Gastrocnemius medialis (tissue), 4 donors: ENCODE measurements at regions of chr15 and their contacts with region 1.

Region 1: DNA sequence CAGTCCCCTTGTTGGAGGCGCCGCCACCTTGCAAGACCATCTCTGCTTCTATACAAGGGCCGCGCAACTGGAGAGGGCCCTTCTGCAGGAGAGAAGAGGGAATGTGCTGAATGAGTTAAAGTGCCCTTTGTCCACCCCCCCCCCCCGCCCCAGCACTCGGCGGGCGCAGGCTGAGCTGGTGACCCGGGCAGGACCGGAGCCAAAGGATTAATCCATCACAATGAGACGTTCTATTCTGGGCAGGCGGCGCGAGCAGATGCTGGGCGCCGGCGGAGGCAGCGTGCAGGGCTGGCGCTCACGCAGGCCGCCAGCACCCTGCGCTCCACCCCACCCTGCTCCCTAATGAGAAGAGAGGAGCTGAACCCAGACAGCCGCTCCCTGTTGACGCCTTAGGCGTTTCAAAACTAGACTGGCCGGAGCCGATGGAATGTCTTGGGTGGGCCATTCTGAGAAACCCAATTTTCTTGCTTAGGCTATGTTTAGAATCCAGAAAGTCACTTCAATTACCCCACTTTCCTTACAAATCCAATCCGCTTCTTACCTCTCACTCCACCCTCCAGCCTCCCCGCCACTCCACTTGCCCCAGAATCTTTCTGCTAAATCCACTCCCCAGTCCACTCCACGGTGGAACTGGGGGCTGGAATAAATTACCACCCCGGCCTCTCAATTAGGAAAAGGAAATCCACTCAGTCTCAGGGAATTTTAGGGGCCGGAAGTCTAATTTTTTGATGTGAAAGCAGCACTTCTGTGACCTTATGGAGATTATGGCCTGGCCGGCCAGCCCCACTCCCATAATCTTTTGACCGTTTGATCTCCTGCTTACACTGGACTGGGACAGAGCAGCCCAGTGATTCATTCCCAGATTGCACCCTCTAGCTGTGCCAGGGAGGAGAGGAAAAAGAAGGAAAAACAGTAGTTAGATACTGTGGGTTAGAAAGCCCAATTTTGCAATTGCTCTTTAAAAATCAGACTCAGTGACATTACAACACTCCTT is 32.7 kb downstream of the GJD2 start:
- DNase-seq: peak; percentile 30 to 64
- ATAC-seq: peak; percentile 45 to 46
- H3K4me3 ChIP-seq: peak overlapping the region in 3 of 4 donors; percentile 19 to 35 (median 19)
- H3K27ac ChIP-seq: peak overlapping the region; percentile 35 to 61 (median 40)
- H3K4me1 ChIP-seq: peaks cover 50 to 59% of the 10 kb centered on the region in 2 donors
- H3K27me3 ChIP-seq: no peaks in the 10 kb centered on the region
- CTCF ChIP-seq: no peak
- POLR2A ChIP-seq: peak; percentile 26 to 32

Region 2: DNA sequence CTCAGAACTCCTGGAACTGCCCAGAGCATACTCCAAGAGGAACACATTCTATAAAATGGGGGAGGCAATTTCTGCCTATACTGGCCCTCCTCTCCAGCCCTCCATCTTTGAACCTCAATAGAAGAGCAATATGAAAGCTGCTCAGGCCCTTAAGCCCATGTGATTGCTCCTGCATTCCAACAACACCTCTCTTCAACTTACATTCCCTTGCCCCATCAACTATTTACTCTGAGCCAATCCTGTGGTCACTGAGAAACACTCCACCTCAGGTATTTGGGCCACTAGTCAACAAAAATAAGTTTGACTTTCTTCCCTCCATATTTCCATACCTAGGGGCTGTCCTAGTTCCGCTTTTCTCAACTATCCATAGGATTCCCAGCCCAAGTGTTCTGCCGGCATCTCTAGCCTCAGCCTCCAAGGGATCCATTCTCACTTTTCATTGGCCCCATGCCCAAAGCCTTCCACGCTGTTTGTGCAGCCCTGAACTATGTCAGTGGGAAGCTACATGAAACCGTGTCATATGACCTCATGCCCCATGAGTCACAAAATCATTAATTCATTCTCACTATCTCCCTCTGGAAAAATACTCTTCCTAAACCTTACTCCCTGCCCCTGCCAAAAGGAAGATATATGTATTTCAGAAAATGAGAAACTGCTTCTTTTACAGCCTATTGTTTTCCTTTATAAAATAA is 28.9 kb before region 1 on chr15:
- in situ Hi-C with region 1: no loop called
- intact Hi-C with region 1: no loop called
- DNase-seq: no peak
- ATAC-seq: no peak
- H3K4me3 ChIP-seq: no peak overlapping the region
- H3K27ac ChIP-seq: no peak overlapping the region
- H3K4me1 ChIP-seq: no peaks in the 10 kb centered on the region
- H3K27me3 ChIP-seq: no peaks in the 10 kb centered on the region
- CTCF ChIP-seq: no peak
- POLR2A ChIP-seq: no peak

Region 3: GRCh38 chr15:34795267-34796081 is 73.4 kb after region 1 on chr15 and contains the start of gene ACTC1:
- in situ Hi-C with region 1: no loop called
- intact Hi-C with region 1: loop called (anchors 5 kb)
- DNase-seq: peak; percentile 16 to 55
- ATAC-seq: peak; percentile 65 to 73
- H3K4me3 ChIP-seq: peak within 1 kb of the TSS; percentile 40 to 49 (median 47)
- H3K27ac ChIP-seq: peak within 1 kb of the TSS in 3 of 4 donors; percentile 35 to 79 (median 35)
- H3K4me1 ChIP-seq: peaks cover 16 to 23% of the 10 kb centered on the region in 2 donors
- H3K27me3 ChIP-seq: no peaks in the 10 kb centered on the region
- CTCF ChIP-seq: peak in 1 of 5 experiments; percentile 10
- POLR2A ChIP-seq: peak; percentile 40 to 63
- total RNA-seq, gene ACTC1: 5.6 to 449 (median 78.0) TPM

Region 4: DNA sequence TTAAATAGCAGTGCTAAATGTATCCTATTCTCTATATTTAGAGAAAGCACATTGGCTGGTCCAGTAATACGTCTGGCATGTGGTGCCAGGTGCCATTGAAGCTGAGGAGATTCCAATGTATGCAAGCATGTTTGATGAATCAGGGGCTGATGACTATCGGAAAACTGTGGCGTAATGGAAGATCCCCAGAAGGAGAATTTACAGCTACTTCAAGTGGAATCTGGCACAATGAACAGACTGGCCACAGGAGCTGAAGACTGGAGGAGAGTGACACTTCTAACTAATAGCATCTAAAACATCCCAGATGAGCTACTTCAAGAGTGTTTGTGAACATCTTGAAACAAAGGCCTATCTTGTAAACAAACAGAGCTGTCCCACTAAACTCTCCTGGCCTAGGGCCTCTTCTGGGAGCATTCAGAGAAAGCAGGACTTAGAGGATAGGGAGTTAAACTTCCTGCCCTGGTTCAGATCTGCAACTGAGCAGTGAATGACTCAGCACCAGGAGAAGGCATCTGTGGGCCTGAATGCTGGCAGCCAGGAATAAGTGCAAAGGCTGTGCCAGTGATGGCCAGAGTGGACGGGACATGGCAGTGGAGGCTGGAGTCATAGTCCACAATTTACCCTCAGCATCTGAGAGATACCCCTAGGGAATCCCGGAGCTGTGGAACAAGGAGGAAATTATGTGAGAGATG is 88.5 kb after region 1 on chr15:
- in situ Hi-C with region 1: no loop called
- intact Hi-C with region 1: loop called (anchors 5 kb)
- DNase-seq: peak in 1 of 2 donors; percentile 34
- ATAC-seq: peak; percentile 74 to 85
- H3K4me3 ChIP-seq: no peak overlapping the region
- H3K27ac ChIP-seq: peak overlapping the region; percentile 53 to 76 (median 55)
- H3K4me1 ChIP-seq: peaks cover 0 to 8% of the 10 kb centered on the region in 2 donors
- H3K27me3 ChIP-seq: peaks cover 0 to 2% (median 0%) of the 10 kb centered on the region in 3 donors
- CTCF ChIP-seq: no peak
- POLR2A ChIP-seq: peak in 1 of 2 donors; percentile 12